Naive thymus-derived CD4-positive, alpha-beta T cell (primary cell): ENCODE measurements at regions of chr5 and their contacts with region 1.

Region 1: DNA sequence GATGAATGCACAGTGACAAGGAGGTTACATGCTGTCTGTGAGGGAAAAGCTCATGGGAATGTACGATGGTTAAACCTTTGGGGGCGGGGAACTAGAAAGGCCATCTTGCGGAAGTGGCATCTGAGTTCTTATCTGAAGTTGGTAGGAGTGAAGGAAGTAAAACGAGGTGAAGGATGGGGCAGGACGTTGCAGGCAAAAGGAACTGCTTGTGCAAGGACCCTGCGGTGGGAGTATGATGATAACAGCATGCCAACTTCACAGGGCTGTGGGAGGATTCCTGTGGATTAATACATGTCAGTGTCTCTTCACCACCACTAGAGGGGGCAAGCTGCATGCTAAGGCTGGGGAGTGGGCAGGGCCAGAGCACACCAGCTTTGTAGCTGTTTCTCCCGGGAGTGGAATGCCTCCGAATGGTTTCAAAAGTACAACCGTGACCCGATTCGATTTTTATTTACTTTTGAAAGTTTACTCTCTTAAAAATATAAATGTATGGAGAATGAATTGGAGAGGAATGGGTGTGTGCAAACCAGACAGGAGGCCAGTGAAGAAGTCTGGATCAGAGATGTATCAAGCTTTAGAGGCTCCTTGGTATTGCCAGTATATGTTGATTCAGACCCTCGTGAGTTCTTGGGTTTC is 62.5 kb downstream of the CYFIP2 start:
- DNase-seq: peak in 8 of 9 donors; percentile 42 to 67 (median 60)
- ATAC-seq: peak; percentile 93
- H3K4me3 ChIP-seq: no peak overlapping the region
- H3K4me3 Mint-ChIP-seq: peak overlapping the region; percentile 29 to 80 (median 68)
- H3K27ac ChIP-seq: peak overlapping the region; percentile 63
- H3K27ac Mint-ChIP-seq: peak overlapping the region; percentile 71 to 95 (median 91)
- H3K4me1 ChIP-seq: peaks cover 10 to 24% of the 10 kb centered on the region in 2 donors
- H3K4me1 Mint-ChIP-seq: peaks cover 28 to 50% (median 45%) of the 10 kb centered on the region in 7 donors
- H3K27me3 ChIP-seq: no peaks in the 10 kb centered on the region
- H3K27me3 Mint-ChIP-seq: no peaks in the 10 kb centered on the region

Region 2: DNA sequence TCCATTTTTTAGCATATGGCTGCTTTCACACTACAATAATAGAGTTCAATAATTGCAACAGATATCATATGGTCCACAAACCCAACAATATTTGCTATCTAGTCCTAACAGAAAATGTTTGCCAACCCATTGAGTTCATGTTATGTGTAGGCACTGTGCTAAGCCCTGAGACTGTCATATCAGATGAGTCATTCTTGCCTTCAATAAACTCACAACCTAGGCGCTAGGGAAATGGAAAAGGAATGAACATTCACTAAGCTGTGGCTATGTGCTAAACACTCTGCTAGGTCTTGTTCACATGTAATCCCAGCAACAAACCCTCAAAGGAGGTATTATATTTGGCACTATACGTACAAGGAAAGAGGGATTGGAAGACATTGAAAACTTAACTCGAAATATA is 357.0 kb before region 1 on chr5:
- CTCF ChIA-PET with region 1: no interaction called
- POLR2A ChIA-PET with region 1: no interaction called
- intact Hi-C with region 1: no loop called
- DNase-seq: no peak
- ATAC-seq: no peak
- H3K4me3 ChIP-seq: no peak overlapping the region
- H3K4me3 Mint-ChIP-seq: no peak overlapping the region
- H3K27ac ChIP-seq: no peak overlapping the region
- H3K27ac Mint-ChIP-seq: peak overlapping the region in 1 of 9 donors; percentile 4
- H3K4me1 ChIP-seq: no peaks in the 10 kb centered on the region
- H3K4me1 Mint-ChIP-seq: peaks cover 0 to 8% (median 0%) of the 10 kb centered on the region in 7 donors
- H3K27me3 ChIP-seq: no peaks in the 10 kb centered on the region
- H3K27me3 Mint-ChIP-seq: no peaks in the 10 kb centered on the region

Region 3: DNA sequence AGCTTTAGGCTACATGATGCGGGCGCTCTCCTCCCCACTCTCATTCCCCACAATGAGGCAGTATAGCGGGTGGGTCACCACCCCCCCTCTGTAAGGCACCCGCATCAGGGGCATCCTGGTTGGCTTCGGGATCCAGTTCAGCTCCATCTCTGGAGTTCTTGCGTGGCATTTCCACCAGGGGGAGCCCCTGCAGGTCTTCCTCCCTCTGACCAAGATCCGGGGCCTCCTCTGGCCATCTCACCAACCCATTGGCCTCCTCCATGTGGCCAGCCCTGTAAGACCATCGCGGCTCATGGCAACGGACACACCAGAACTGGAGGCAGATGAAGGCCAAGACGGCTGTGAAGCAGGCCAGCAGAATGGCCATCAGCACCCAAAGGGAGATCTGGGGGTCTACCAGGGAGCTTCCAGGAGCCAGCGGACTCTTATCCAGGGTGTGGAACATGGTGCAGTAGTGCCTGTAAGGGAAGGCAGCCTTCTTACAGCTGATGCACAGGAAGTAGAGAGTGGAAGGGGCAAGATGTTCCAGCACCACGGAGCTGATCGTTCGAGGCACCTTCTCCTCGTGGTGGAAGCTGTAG is 14.5 kb after region 1 on chr5:
- CTCF ChIA-PET with region 1: interaction called, 22 read pairs
- POLR2A ChIA-PET with region 1: interaction called, 3 read pairs
- intact Hi-C with region 1: loop called in 1 of 2 experiments (anchors 1 kb)
- DNase-seq: peak in 3 of 9 donors; percentile 13 to 49 (median 19)
- ATAC-seq: peak; percentile 65
- H3K4me3 ChIP-seq: no peak overlapping the region
- H3K4me3 Mint-ChIP-seq: no peak overlapping the region
- H3K27ac ChIP-seq: no peak overlapping the region
- H3K27ac Mint-ChIP-seq: peak overlapping the region in 4 of 9 donors; percentile 19 to 39 (median 24)
- H3K4me1 ChIP-seq: no peaks in the 10 kb centered on the region
- H3K4me1 Mint-ChIP-seq: peaks cover 5 to 23% (median 15%) of the 10 kb centered on the region in 7 donors
- H3K27me3 ChIP-seq: no peaks in the 10 kb centered on the region
- H3K27me3 Mint-ChIP-seq: no peaks in the 10 kb centered on the region

Region 4: GRCh38 chr5:157476702-157477408 is 148.5 kb after region 1 on chr5:
- CTCF ChIA-PET with region 1: interaction called, 3 read pairs
- POLR2A ChIA-PET with region 1: no interaction called
- intact Hi-C with region 1: loop called (anchors 1 to 5 kb)
- DNase-seq: peak in 5 of 9 donors; percentile 14 to 34 (median 17)
- ATAC-seq: peak; percentile 60
- H3K4me3 ChIP-seq: no peak overlapping the region
- H3K4me3 Mint-ChIP-seq: no peak overlapping the region
- H3K27ac ChIP-seq: no peak overlapping the region
- H3K27ac Mint-ChIP-seq: peak overlapping the region in 1 of 9 donors; percentile 56
- H3K4me1 ChIP-seq: no peaks in the 10 kb centered on the region
- H3K4me1 Mint-ChIP-seq: peaks cover 0 to 79% (median 0%) of the 10 kb centered on the region in 7 donors
- H3K27me3 ChIP-seq: no peaks in the 10 kb centered on the region
- H3K27me3 Mint-ChIP-seq: no peaks in the 10 kb centered on the region